ENCODE measurements at regions of chr11 and their contacts with region 1.

Region 1: DNA sequence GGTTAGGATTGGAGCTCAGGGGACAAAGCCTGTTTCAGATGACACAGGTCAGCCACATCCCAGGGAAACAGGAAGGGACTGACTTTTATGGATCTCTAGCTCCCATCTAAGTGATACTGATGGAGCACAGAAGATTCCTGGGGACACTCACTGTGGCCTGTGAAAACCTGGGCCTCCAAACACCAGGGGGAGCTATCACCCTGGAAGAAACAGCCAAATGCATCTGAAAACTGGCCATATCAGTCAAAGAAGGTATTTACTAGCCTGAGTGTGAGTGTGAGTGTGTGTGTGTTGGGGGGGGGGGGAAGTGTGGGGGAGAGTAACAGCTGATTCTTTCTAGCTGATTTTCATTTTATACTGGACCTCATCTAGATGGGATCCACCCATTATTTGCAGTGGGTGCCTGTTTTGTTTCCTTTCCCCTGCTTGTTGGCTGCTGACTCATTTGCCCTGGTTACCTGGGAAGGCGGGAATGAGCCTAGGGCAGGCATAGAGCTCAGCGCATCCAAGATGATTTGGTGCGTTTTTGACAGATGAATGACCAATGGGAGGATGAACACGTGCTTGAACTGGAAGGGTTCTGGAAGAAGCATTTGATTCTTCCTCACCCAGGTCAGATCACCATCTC is 284.0 kb downstream of the KIRREL3 start:
- DNase-seq: peak; percentile 67
- H3K4me3 Mint-ChIP-seq: no peak overlapping the region
- H3K27ac Mint-ChIP-seq: no peak overlapping the region
- H3K4me1 Mint-ChIP-seq: peaks cover 17% of the 10 kb centered on the region
- H3K27me3 Mint-ChIP-seq: peaks cover 64% of the 10 kb centered on the region
- CTCF ChIP-seq: peak; percentile 42

Region 2: DNA sequence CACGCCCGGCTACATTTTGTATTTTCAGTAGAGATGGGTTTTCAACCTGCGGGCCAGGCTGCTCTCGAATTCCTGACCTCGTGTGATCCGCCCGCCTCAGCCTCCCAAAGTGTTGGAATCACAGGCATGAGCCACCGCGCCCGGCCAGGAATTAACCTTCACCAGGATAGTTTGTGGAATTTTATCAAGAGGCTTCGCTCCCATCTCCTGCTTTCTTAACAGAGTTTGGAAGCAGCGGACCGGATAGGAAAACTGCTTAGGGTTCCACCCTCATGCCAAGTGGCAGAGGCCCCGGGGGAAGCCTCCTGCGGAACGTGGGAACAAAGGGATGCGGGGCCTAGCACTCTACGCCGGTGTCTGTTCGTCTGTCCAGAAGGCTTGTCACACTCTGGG is 131.2 kb before region 1 on chr11:
- CTCF ChIA-PET with region 1: no interaction called
- intact Hi-C with region 1: no loop called
- DNase-seq: no peak
- H3K4me3 Mint-ChIP-seq: no peak overlapping the region
- H3K27ac Mint-ChIP-seq: no peak overlapping the region
- H3K4me1 Mint-ChIP-seq: no peaks in the 10 kb centered on the region
- H3K27me3 Mint-ChIP-seq: no peaks in the 10 kb centered on the region
- CTCF ChIP-seq: no peak

Region 3: DNA sequence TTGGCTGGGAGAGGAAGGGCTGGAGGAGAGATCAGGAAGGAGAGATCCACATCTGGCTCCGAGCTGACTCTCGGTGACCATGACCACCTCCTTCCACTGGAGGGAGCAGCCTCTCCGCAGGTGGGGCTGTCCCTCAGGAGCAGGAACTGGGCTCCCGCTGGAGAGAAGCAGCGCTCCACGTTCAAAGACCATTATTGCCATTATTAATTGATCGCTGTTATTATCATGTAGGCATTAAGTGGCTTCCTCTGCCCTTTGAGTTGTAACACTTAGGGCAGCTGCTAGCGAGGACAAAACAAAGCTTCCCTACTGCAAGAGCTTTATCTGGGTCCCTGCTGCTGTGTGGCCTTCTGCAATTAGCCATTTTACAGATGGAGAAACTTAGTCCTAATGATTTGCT is 109.2 kb before region 1 on chr11:
- CTCF ChIA-PET with region 1: no interaction called
- intact Hi-C with region 1: loop called (anchors 5 kb)
- DNase-seq: peak; percentile 67
- H3K4me3 Mint-ChIP-seq: no peak overlapping the region
- H3K27ac Mint-ChIP-seq: no peak overlapping the region
- H3K4me1 Mint-ChIP-seq: no peaks in the 10 kb centered on the region
- H3K27me3 Mint-ChIP-seq: peaks cover 63% of the 10 kb centered on the region
- CTCF ChIP-seq: peak; percentile 59

Region 4: DNA sequence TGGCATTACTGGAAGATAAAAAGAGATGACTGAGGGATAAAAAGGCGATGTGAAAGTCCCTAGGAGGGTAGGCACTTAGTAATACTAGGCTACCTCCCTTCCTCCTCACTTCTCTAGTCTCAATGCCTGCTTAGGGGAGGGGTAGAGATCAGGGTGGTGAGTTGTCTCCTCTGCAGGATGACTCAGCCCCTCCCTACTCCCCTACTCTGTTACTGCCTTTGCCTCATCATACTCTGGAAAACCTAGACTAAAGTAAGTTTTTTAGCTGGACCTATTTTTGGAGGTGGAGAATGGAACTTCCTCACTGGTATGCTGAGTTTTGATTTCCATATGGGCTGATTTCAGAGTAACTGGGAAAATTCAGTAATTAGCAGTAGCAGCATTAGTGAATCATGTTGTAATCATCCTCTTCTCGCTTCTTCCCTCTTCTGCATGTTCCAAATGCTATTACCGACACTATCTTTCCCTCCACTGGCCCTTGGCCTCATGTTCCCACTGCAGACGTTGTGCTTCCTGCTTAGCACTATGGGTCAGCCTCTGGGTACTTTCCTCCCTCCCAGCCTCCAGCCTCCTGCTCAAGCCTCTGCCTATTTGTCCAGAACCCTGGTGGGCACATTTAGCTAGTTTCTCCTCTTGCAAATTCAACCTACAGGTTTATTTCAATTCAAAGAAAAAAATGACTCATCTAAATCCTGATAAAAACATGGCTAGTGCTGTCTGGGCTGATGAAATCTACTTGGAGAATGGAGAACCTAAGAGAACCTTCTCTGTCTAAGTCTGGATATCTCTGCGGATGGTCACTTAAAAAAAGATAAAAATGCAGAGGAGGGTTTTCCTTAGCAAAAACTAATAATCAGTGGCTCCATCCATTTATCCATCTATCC is 79.4 kb before region 1 on chr11:
- CTCF ChIA-PET with region 1: interaction called, 12 read pairs
- intact Hi-C with region 1: no loop called
- DNase-seq: no peak
- H3K4me3 Mint-ChIP-seq: no peak overlapping the region
- H3K27ac Mint-ChIP-seq: no peak overlapping the region
- H3K4me1 Mint-ChIP-seq: no peaks in the 10 kb centered on the region
- H3K27me3 Mint-ChIP-seq: peaks cover 61% of the 10 kb centered on the region
- CTCF ChIP-seq: no peak

Region 5: DNA sequence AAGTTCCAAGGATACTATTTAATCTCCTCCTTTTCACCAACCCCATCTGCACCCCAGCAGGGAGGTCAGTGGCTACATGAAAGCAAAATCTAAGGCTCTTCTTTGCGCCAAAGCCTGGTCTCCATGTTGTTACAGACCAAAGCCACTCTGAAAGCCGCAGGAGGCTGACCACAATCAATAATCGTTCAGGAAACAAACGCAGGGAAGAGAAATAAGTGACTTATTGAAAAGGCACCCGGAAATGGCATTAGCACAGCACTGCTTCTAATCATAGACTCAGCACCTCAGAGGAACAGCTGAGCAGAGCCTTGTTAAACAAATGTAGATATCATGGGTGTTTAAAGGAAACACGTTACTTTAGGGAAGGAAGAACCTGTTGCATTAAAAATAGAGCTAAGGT is 100.1 kb after region 1 on chr11:
- CTCF ChIA-PET with region 1: no interaction called
- intact Hi-C with region 1: loop called (anchors 1 kb)
- DNase-seq: peak; percentile 58
- H3K4me3 Mint-ChIP-seq: peak overlapping the region; percentile 52
- H3K27ac Mint-ChIP-seq: peak overlapping the region; percentile 94
- H3K4me1 Mint-ChIP-seq: peaks cover 23% of the 10 kb centered on the region
- H3K27me3 Mint-ChIP-seq: no peaks in the 10 kb centered on the region
- CTCF ChIP-seq: no peak

Region 6: DNA sequence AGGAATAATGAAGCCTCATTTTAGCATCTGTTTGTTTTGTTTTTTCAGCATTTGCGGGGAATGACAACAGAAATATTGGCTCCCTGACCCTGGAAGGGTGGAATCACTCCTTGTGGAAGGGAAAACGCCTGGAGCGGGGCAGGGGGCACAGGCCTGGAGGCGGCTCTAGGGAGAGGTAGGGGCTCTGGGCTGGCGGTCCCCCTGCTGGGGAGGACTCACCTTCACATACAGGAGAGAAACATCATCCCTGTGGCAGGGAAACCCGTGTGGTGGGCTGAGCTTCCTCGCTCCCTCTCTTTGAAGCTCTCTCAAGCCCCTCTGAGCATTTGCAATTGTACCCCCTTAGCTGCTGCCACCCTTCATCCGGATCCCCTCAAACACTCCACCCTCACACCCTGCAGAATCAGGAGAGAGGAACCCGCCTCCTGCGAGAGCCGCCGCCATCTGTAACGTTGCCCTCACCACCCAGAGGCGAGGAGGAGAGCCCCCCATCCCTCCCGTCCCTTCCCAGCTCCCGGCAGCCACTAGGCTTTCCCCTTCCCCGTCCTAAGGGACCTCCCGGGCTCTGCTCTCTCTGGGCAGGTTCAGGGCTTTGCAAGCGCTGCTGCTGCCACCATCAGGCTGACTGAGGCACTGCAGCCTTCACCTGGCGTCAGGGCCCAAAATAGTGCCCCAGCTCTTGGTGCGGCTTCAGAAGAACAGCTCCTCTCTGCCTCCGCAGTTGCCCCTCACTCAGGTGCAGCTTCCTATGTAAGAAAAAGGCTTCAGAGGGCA is 273.6 kb after region 1 on chr11:
- CTCF ChIA-PET with region 1: interaction called, 11 read pairs
- intact Hi-C with region 1: loop called (anchors 1 kb)
- DNase-seq: peak; percentile 74
- H3K4me3 Mint-ChIP-seq: no peak overlapping the region
- H3K27ac Mint-ChIP-seq: no peak overlapping the region
- H3K4me1 Mint-ChIP-seq: peaks cover 10% of the 10 kb centered on the region
- H3K27me3 Mint-ChIP-seq: no peaks in the 10 kb centered on the region
- CTCF ChIP-seq: peak; percentile 78

Region 7: DNA sequence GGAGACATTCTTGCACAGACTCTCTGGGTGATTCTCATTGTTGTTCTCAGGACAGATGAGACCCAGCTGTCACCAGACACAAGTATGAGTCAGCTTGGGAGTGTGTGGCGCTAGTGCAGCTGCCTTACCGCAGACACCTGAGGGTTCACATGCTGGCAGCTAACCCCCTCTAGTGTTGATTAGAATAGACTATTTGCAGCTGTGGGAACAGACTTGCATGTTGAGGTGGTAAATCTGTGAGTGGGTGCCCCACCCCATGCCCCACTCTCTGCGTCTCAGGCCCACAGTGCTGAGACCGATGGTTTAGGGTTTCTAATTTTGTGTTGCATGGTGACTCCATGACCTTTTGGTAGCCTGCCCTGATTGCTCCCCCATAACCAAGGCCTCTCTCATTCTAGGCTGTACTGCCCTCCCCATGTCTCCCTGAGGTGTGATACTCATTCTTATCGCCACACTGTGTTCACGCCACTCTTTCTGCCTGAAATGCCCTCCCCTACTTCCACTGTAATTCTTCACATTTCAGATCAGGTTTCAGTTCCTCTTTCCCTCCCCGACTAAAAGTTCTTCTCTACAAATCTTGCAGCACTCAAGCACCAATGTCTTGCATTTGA is 357.7 kb after region 1 on chr11:
- CTCF ChIA-PET with region 1: interaction called, 7 read pairs
- intact Hi-C with region 1: loop called (anchors 5 kb)
- DNase-seq: peak; percentile 60
- H3K4me3 Mint-ChIP-seq: no peak overlapping the region
- H3K27ac Mint-ChIP-seq: no peak overlapping the region
- H3K4me1 Mint-ChIP-seq: peaks cover 15% of the 10 kb centered on the region
- H3K27me3 Mint-ChIP-seq: no peaks in the 10 kb centered on the region
- CTCF ChIP-seq: peak; percentile 28